ENCODE measurements at regions of chr19 and their contacts with region 1.

Region 1: GRCh38 chr19:19643158-19644053 is at the start of gene GMIP:
- DNase-seq: peak; percentile 82 to 94 (median 88)
- ATAC-seq: peak; percentile 90
- H3K4me3 ChIP-seq: peak within 1 kb of the TSS; percentile 100
- H3K4me3 Mint-ChIP-seq: peak within 1 kb of the TSS; percentile 99
- H3K27ac ChIP-seq: peak within 1 kb of the TSS; percentile 91 to 97
- H3K27ac Mint-ChIP-seq: peak within 1 kb of the TSS; percentile 95
- H3K4me1 ChIP-seq: peaks cover 33% of the 10 kb centered on the region
- H3K4me1 Mint-ChIP-seq: peaks cover 23% of the 10 kb centered on the region
- H3K27me3 ChIP-seq: no peaks in the 10 kb centered on the region
- H3K27me3 Mint-ChIP-seq: no peaks in the 10 kb centered on the region
- CTCF ChIP-seq: peak; percentile 74
- total RNA-seq, gene GMIP: 89.6 to 97.0 TPM

Region 2: GRCh38 chr19:19515764-19516519 is 127.5 kb before region 1 on chr19 and contains the start of gene NDUFA13:
- CTCF ChIA-PET with region 1: interaction called, 5 read pairs
- POLR2A ChIA-PET with region 1: interaction called, 3 read pairs
- intact Hi-C with region 1: loop called in 1 of 2 experiments (anchors 1 kb)
- DNase-seq: peak; percentile 84 to 97 (median 92)
- ATAC-seq: peak; percentile 87
- H3K4me3 ChIP-seq: peak within 1 kb of the TSS; percentile 77
- H3K4me3 Mint-ChIP-seq: peak within 1 kb of the TSS; percentile 94
- H3K27ac ChIP-seq: peak within 1 kb of the TSS; percentile 76 to 87
- H3K27ac Mint-ChIP-seq: peak within 1 kb of the TSS; percentile 86
- H3K4me1 ChIP-seq: peaks cover 46% of the 10 kb centered on the region
- H3K4me1 Mint-ChIP-seq: peaks cover 32% of the 10 kb centered on the region
- H3K27me3 ChIP-seq: no peaks in the 10 kb centered on the region
- H3K27me3 Mint-ChIP-seq: no peaks in the 10 kb centered on the region
- CTCF ChIP-seq: no peak
- total RNA-seq, gene NDUFA13: 145 to 156 TPM

Region 3: DNA sequence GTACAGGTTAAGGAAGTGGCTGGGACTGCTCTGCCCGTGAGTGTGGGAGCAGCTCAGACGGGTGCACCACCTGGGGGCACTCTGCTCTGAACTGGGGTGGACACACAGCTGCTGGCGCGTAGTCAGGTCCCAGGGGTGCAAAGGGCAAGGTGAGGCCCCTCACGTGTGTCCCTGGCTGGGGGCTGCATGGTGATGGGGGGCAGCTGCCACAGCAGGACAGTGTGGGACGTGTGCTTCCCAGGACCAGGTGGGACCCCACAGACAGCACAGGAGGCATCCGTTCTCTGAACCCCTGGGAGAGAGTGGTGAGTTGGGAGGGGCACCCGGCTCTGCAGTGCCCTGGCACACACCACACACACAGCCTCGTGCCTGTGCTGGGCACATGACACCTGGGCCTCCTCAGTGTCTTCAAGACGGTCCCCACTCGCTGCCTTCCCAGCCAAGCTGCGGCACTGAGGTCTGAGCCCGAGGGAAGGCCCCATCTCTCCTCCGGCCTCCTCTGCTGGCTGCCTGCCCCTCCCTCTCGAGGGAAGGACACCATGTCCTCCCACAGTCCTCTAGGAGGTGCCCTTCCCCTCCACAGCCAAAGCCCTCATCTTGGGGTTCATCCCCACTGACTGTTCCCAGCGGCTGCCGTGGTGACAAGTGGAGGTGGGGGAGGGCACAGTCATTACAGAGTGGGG is 80.6 kb before region 1 on chr19:
- CTCF ChIA-PET with region 1: interaction called, 5 read pairs
- POLR2A ChIA-PET with region 1: interaction called, 3 read pairs
- intact Hi-C with region 1: loop called in 1 of 2 experiments (anchors 1 kb)
- DNase-seq: peak in 10 of 14 experiments; percentile 27 to 74 (median 45)
- ATAC-seq: peak; percentile 72
- H3K4me3 ChIP-seq: no peak overlapping the region
- H3K4me3 Mint-ChIP-seq: no peak overlapping the region
- H3K27ac ChIP-seq: no peak overlapping the region
- H3K27ac Mint-ChIP-seq: no peak overlapping the region
- H3K4me1 ChIP-seq: peaks cover 19% of the 10 kb centered on the region
- H3K4me1 Mint-ChIP-seq: peaks cover 33% of the 10 kb centered on the region
- H3K27me3 ChIP-seq: no peaks in the 10 kb centered on the region
- H3K27me3 Mint-ChIP-seq: no peaks in the 10 kb centered on the region
- CTCF ChIP-seq: peak; percentile 36

Region 4: DNA sequence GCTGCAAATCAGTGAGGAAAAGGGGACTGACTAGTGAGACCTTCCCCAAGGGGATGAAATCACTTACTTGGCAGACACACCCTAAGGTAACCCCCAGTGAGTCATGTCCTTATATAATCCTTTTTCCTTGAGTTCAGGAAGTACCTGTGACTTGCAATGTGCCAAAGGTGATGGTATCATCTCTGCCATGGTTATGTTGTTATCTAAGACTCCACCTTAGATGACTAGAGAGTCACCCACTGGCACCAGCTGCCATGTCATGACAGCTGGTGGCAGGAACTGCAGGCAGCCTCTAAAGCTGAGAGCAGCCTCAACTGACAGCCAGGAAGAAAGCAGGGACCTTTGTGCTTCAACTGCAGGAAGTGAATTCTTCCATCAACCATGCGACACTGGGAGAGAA is 37.4 kb before region 1 on chr19:
- CTCF ChIA-PET with region 1: interaction called, 20 read pairs
- POLR2A ChIA-PET with region 1: no interaction called
- intact Hi-C with region 1: no loop called
- DNase-seq: peak in 11 of 14 experiments; percentile 42 to 88 (median 64)
- ATAC-seq: peak; percentile 87
- H3K4me3 ChIP-seq: no peak overlapping the region
- H3K4me3 Mint-ChIP-seq: peak overlapping the region; percentile 77
- H3K27ac ChIP-seq: peak overlapping the region; percentile 64 to 66
- H3K27ac Mint-ChIP-seq: peak overlapping the region; percentile 86
- H3K4me1 ChIP-seq: peaks cover 70% of the 10 kb centered on the region
- H3K4me1 Mint-ChIP-seq: peaks cover 65% of the 10 kb centered on the region
- H3K27me3 ChIP-seq: no peaks in the 10 kb centered on the region
- H3K27me3 Mint-ChIP-seq: no peaks in the 10 kb centered on the region
- CTCF ChIP-seq: no peak

Region 5: DNA sequence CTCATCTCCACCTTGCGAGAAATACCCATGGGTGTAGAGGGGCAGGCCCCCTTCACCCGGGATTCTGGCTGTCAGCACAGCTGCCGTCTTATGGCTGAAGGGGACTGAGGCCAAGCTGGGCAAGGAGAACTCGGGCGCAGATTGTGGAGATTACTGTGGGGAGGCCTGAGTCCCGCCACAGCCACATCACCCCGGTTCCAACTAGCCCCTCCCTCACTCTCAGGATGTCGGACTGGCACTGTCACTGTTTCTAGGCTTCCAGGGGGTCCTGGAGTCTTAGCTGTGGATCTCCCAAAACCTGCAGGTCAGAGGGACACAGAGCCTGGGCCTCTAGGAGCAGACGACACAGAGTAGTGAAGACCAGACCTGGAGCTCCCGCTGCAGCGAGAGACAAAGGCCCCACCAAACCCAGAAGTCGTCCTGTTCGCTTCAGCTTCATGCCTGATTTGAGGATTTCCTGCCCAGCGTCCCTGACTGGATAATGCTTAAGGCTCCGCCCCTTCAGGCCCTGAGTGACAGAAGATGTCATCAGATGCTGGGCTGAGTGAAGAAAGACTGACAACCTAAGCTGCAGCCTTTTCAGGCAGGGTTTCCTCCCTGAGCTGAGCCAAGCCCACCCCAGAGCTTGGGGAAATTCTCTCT is 313.1 kb after region 1 on chr19:
- CTCF ChIA-PET with region 1: no interaction called
- POLR2A ChIA-PET with region 1: no interaction called
- intact Hi-C with region 1: loop called in 1 of 2 experiments (anchors 2 kb)
- DNase-seq: no peak
- ATAC-seq: no peak
- H3K4me3 ChIP-seq: no peak overlapping the region
- H3K4me3 Mint-ChIP-seq: no peak overlapping the region
- H3K27ac ChIP-seq: no peak overlapping the region
- H3K27ac Mint-ChIP-seq: no peak overlapping the region
- H3K4me1 ChIP-seq: peaks cover 6% of the 10 kb centered on the region
- H3K4me1 Mint-ChIP-seq: no peaks in the 10 kb centered on the region
- H3K27me3 ChIP-seq: no peaks in the 10 kb centered on the region
- H3K27me3 Mint-ChIP-seq: no peaks in the 10 kb centered on the region
- CTCF ChIP-seq: no peak

Measured in CD4-positive, alpha-beta T cell (primary cell).